T-cell (primary cell): ENCODE measurements at regions of chr6 and their contacts with region 1.

Region 1: DNA sequence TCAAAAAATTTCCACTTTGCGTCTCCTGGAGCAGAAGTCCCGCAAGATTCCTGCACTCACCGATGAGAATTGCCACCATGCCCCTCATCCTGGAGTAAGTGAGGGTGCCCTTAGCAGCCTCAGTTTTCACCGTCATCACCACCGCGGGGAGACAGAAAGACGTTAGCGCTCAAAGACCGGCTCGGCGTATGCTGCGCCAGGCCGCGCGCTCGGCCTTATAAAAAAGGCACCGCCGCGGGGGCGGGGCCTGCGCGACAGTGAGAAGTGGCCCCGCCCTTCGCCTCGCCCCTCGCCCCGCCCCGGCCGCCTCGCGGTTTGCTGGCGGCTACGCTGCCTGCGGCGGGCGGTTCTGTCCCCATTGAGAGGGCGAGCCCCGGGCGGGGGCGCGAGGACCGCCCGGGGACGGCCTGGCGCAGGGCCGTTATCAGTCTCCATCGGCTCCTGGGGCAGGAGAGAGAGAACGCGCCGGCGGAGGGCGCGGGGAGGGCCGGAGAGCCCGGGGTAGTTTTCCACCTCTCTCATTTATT is 122.3 kb upstream of the SLC2A12 start:
- DNase-seq: peak; percentile 78 to 97 (median 92)
- ATAC-seq: peak; percentile 75 to 87 (median 80)
- H3K4me3 ChIP-seq: peak overlapping the region; percentile 66 to 78
- H3K4me3 Mint-ChIP-seq: peak overlapping the region; percentile 94 to 99 (median 97)
- H3K27ac ChIP-seq: peak overlapping the region; percentile 82
- H3K27ac Mint-ChIP-seq: peak overlapping the region; percentile 95 to 98
- H3K4me1 ChIP-seq: peaks cover 50 to 57% of the 10 kb centered on the region in 2 experiments
- H3K4me1 Mint-ChIP-seq: peaks cover 74 to 81% (median 75%) of the 10 kb centered on the region in 3 donors
- H3K27me3 ChIP-seq: no peaks in the 10 kb centered on the region
- H3K27me3 Mint-ChIP-seq: no peaks in the 10 kb centered on the region

Region 2: GRCh38 chr6:132820629-132821381 is 1353.9 kb before region 1 on chr6:
- CTCF ChIA-PET with region 1: no interaction called
- POLR2A ChIA-PET with region 1: interaction called in 1 of 2 experiments, 13 read pairs
- DNase-seq: peak in 1 of 35 experiments; percentile 12
- ATAC-seq: peak in 1 of 4 experiments; percentile 19
- H3K4me3 ChIP-seq: no peak overlapping the region
- H3K4me3 Mint-ChIP-seq: no peak overlapping the region
- H3K27ac ChIP-seq: no peak overlapping the region
- H3K27ac Mint-ChIP-seq: peak overlapping the region; percentile 88
- H3K4me1 ChIP-seq: peaks cover 9 to 15% of the 10 kb centered on the region in 2 experiments
- H3K4me1 Mint-ChIP-seq: peaks cover 48 to 61% (median 53%) of the 10 kb centered on the region in 3 donors
- H3K27me3 ChIP-seq: no peaks in the 10 kb centered on the region
- H3K27me3 Mint-ChIP-seq: no peaks in the 10 kb centered on the region

Region 3: GRCh38 chr6:134205366-134205765 is 30.6 kb after region 1 on chr6:
- CTCF ChIA-PET with region 1: no interaction called
- POLR2A ChIA-PET with region 1: no interaction called
- DNase-seq: no peak
- ATAC-seq: no peak
- H3K4me3 ChIP-seq: no peak overlapping the region
- H3K4me3 Mint-ChIP-seq: no peak overlapping the region
- H3K27ac ChIP-seq: no peak overlapping the region
- H3K27ac Mint-ChIP-seq: no peak overlapping the region
- H3K4me1 ChIP-seq: no peaks in the 10 kb centered on the region
- H3K4me1 Mint-ChIP-seq: peaks cover 0 to 8% (median 0%) of the 10 kb centered on the region in 3 donors
- H3K27me3 ChIP-seq: no peaks in the 10 kb centered on the region
- H3K27me3 Mint-ChIP-seq: no peaks in the 10 kb centered on the region

Region 4: GRCh38 chr6:134640975-134641429 is 466.3 kb after region 1 on chr6:
- CTCF ChIA-PET with region 1: interaction called, 18 to 29 read pairs
- POLR2A ChIA-PET with region 1: interaction called, 7 to 12 read pairs
- DNase-seq: peak; percentile 46 to 89 (median 69)
- ATAC-seq: peak; percentile 86 to 90 (median 89)
- H3K4me3 ChIP-seq: no peak overlapping the region
- H3K4me3 Mint-ChIP-seq: no peak overlapping the region
- H3K27ac ChIP-seq: no peak overlapping the region
- H3K27ac Mint-ChIP-seq: no peak overlapping the region
- H3K4me1 ChIP-seq: peaks cover 0 to 8% of the 10 kb centered on the region in 2 experiments
- H3K4me1 Mint-ChIP-seq: peaks cover 18 to 20% (median 18%) of the 10 kb centered on the region in 3 donors
- H3K27me3 ChIP-seq: no peaks in the 10 kb centered on the region
- H3K27me3 Mint-ChIP-seq: no peaks in the 10 kb centered on the region